ENCODE measurements at regions of chr11 and their contacts with region 1.

Region 1: DNA sequence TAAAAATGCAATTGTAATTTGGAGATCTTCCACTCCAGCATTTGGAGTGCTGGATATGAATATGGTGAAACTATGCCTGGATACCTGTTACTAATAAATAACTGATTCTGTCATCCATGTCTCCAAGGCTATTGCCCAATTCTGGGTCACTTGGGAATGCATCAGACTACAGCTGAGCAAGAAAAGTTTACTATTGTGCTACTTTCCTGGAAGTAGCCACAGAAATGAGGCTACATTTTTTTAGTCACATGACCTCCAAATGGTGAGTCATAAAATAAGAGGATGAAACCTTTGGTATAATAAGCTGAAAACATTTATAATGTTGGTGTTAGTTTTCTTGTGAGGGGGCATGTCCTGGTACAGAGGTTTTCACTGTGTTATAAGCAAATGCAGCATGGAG is 44.4 kb downstream of the DCDC1 start:
- DNase-seq: no peak
- ATAC-seq: peak in 1 of 4 donors; percentile 54
- H3K4me3 ChIP-seq: no peak overlapping the region
- H3K27ac ChIP-seq: no peak overlapping the region
- H3K4me1 ChIP-seq: no peaks in the 10 kb centered on the region
- H3K27me3 ChIP-seq: no peaks in the 10 kb centered on the region
- CTCF ChIP-seq: no peak
- POLR2A ChIP-seq: no peak

Region 2: DNA sequence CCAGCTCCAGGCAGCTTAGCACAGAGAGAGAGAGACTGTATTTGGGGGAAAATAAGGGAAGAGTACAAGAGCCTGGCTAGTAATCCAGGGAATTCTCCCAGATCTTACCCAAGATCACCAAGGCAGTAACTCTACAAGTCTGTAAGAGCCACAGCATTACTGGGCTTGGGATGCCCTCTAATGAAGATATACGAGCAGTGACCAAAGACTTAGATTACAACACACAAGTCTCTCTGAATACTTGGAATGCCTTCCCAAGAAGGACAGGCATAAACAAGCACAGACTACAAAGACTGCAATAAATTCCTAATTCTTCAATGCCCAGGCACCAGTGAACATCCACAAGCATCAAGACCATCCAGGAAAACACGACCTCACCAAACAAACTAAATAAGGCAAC is 62.2 kb after region 1 on chr11:
- intact Hi-C with region 1: loop called in 1 of 10 experiments (anchors 10 kb)
- DNase-seq: no peak
- ATAC-seq: no peak
- H3K4me3 ChIP-seq: no peak overlapping the region
- H3K27ac ChIP-seq: no peak overlapping the region
- H3K4me1 ChIP-seq: peaks cover 0 to 4% (median 0%) of the 10 kb centered on the region in 12 donors
- H3K27me3 ChIP-seq: no peaks in the 10 kb centered on the region
- CTCF ChIP-seq: no peak
- POLR2A ChIP-seq: no peak